Gastrocnemius medialis (tissue), 4 donors: ENCODE measurements at regions of chr16 and their contacts with region 1.

Region 1: GRCh38 chr16:81035398-81035974 is at the start of gene ATMIN:
- DNase-seq: peak; percentile 58 to 75
- ATAC-seq: peak; percentile 92 to 93
- H3K4me3 ChIP-seq: peak within 1 kb of the TSS; percentile 59 to 74 (median 72)
- H3K27ac ChIP-seq: peak within 1 kb of the TSS; percentile 66 to 78 (median 76)
- H3K4me1 ChIP-seq: peaks cover 11 to 21% of the 10 kb centered on the region in 2 donors
- H3K27me3 ChIP-seq: no peaks in the 10 kb centered on the region
- CTCF ChIP-seq: peak; percentile 90 to 99 (median 98)
- POLR2A ChIP-seq: peak; percentile 56 to 70
- total RNA-seq, gene ATMIN: 31.1 to 37.1 (median 35.2) TPM

Region 2: GRCh38 chr16:80778707-80779106 is 256.8 kb before region 1 on chr16:
- in situ Hi-C with region 1: no loop called
- intact Hi-C with region 1: no loop called
- DNase-seq: no peak
- ATAC-seq: no peak
- H3K4me3 ChIP-seq: no peak overlapping the region
- H3K27ac ChIP-seq: no peak overlapping the region
- H3K4me1 ChIP-seq: no peaks in the 10 kb centered on the region
- H3K27me3 ChIP-seq: no peaks in the 10 kb centered on the region
- CTCF ChIP-seq: no peak
- POLR2A ChIP-seq: no peak

Region 3: GRCh38 chr16:81006814-81007696 is 28.4 kb before region 1 on chr16 and contains the starts of genes CENPN and CMC2:
- in situ Hi-C with region 1: no loop called
- intact Hi-C with region 1: loop called (anchors 1 kb)
- DNase-seq: peak; percentile 97 to 99
- ATAC-seq: peak; percentile 91 to 95
- H3K4me3 ChIP-seq: peak within 1 kb of the TSS; percentile 87 to 100 (median 98)
- H3K27ac ChIP-seq: peak within 1 kb of the TSS; percentile 95 to 100 (median 100)
- H3K4me1 ChIP-seq: peaks cover 33 to 35% of the 10 kb centered on the region in 2 donors
- H3K27me3 ChIP-seq: no peaks in the 10 kb centered on the region
- CTCF ChIP-seq: peak in 2 of 5 experiments; percentile 12 to 19
- POLR2A ChIP-seq: peak; percentile 97
- total RNA-seq, gene CENPN: 5.2 to 10.9 (median 7.5) TPM
- total RNA-seq, gene CMC2: 78.8 to 89.1 (median 82.7) TPM

Region 4: GRCh38 chr16:81077076-81077940 is 41.8 kb after region 1 on chr16 and contains the start of gene C16orf46:
- in situ Hi-C with region 1: loop called in 1 of 4 experiments (anchors 5 kb)
- intact Hi-C with region 1: loop called (anchors 1 kb)
- DNase-seq: peak; percentile 94 to 95
- ATAC-seq: peak; percentile 94 to 97
- H3K4me3 ChIP-seq: peak within 1 kb of the TSS; percentile 73 to 90 (median 82)
- H3K27ac ChIP-seq: peak within 1 kb of the TSS; percentile 90 to 99 (median 94)
- H3K4me1 ChIP-seq: peaks cover 4 to 7% of the 10 kb centered on the region in 2 donors
- H3K27me3 ChIP-seq: no peaks in the 10 kb centered on the region
- CTCF ChIP-seq: no peak
- POLR2A ChIP-seq: peak; percentile 77 to 85
- total RNA-seq, gene C16orf46: 0.88 TPM in 1 of 4 donors, not detected in the others

Region 5: DNA sequence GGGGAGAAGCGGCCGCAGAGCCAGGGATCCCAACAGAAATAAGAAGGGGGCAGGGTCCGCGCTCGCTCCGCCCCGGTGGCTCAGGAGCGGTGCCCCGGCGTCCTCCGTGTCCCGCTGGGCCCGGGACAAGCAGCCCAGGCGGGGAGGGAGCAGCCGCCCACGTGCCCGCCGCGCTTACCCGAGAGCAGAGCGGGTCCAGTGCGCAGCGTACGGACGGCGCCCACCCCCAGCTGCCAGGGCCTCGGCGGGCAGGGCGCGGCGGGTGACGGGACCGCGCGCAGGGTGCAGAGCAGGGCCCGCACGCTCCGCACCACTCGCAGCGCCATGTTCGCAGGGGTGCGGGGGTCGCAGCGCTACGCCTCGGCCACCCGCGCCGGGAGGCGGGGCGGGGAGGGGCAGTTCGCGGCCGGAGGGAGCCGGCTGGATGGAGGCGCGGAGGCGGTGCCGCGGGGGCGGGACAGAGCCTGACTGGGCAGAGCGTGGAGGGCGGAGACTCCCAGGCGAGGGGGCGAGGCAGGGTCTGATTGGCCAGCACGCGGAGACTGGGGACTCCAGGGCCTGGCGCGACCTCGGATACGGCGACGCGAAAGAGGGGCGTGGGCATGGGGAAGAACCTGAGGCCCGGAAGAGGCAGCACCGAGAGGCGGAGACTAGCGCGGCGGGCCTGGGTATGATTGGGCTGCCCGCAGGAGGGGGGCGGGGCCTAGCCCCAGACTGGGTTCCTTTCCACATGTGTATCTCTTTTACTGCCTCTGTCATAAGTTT is 60.6 kb after region 1 on chr16 and contains the start of gene GCSH:
- in situ Hi-C with region 1: no loop called
- intact Hi-C with region 1: loop called (anchors 2 kb)
- DNase-seq: peak; percentile 99
- ATAC-seq: peak; percentile 95
- H3K4me3 ChIP-seq: peak within 1 kb of the TSS; percentile 71 to 97 (median 86)
- H3K27ac ChIP-seq: peak within 1 kb of the TSS; percentile 80 to 93 (median 90)
- H3K4me1 ChIP-seq: peaks cover 5 to 7% of the 10 kb centered on the region in 2 donors
- H3K27me3 ChIP-seq: no peaks in the 10 kb centered on the region
- CTCF ChIP-seq: no peak
- POLR2A ChIP-seq: peak; percentile 58 to 67
- total RNA-seq, gene GCSH: 18.5 to 40.4 (median 30.9) TPM

Region 6: DNA sequence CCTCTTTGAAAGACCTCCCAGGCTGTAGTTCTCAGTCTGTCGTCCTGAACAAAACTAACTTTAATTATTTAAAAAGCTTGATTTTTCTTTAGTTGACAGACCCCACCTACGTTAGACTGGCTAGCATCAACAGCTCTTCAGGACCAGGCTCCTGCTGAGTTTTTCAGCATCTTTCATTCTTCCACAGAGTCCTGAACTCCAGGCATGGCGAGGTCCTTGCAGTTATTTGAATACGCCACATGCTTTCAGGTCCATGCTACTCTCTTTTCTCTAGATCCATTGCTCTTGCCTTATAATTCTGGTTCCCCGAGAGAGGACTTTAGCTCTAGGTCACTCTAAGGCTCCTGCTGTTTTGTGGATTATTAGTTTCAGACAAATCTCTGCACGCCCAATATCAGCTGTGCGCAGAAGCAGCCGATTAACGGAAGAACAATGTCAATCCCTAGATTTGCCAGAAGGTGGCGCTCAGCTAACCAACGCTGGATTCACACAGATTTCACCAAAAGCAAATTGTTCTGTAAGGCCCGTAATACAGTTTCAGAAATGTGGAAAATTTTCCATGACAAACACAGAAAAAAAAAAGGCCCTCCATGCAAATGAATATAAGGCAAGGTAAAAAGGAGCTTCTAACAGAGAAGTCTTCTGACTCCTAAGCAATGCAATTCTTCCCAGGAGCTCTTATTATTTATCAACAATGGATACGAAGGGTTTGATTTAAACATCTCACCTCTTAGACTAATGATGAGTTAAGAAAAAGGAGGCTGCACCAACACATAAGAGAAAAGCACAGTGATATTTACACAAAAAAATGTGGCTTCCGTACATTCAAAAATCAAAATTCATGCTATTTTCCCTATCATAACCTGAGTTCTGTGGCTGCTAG is 169.6 kb after region 1 on chr16:
- in situ Hi-C with region 1: no loop called
- intact Hi-C with region 1: loop called (anchors 10 kb)
- DNase-seq: no peak
- ATAC-seq: peak; percentile 54 to 62
- H3K4me3 ChIP-seq: no peak overlapping the region
- H3K27ac ChIP-seq: no peak overlapping the region
- H3K4me1 ChIP-seq: no peaks in the 10 kb centered on the region
- H3K27me3 ChIP-seq: no peaks in the 10 kb centered on the region
- CTCF ChIP-seq: peak in 4 of 5 experiments; percentile 48 to 53 (median 50)
- POLR2A ChIP-seq: no peak

Region 7: GRCh38 chr16:81314603-81315270 is 279.3 kb after region 1 on chr16 and contains the start of gene GAN:
- in situ Hi-C with region 1: loop called in 1 of 4 experiments (anchors 25 kb)
- intact Hi-C with region 1: loop called (anchors 2 kb)
- DNase-seq: peak; percentile 93
- ATAC-seq: peak; percentile 95 to 96
- H3K4me3 ChIP-seq: peak within 1 kb of the TSS; percentile 69 to 83 (median 80)
- H3K27ac ChIP-seq: peak within 1 kb of the TSS; percentile 75 to 93 (median 88)
- H3K4me1 ChIP-seq: peaks cover 20 to 29% of the 10 kb centered on the region in 2 donors
- H3K27me3 ChIP-seq: no peaks in the 10 kb centered on the region
- CTCF ChIP-seq: no peak
- POLR2A ChIP-seq: peak; percentile 92 to 93
- total RNA-seq, gene GAN: 5.0 to 8.0 (median 6.4) TPM

Region 8: GRCh38 chr16:81493755-81494433 is 458.4 kb after region 1 on chr16:
- in situ Hi-C with region 1: no loop called
- intact Hi-C with region 1: no loop called
- DNase-seq: no peak
- ATAC-seq: peak; percentile 14 to 46
- H3K4me3 ChIP-seq: no peak overlapping the region
- H3K27ac ChIP-seq: peak overlapping the region; percentile 33 to 65 (median 48)
- H3K4me1 ChIP-seq: peaks cover 0 to 3% of the 10 kb centered on the region in 2 donors
- H3K27me3 ChIP-seq: no peaks in the 10 kb centered on the region
- CTCF ChIP-seq: no peak
- POLR2A ChIP-seq: no peak

Region 9: GRCh38 chr16:81737885-81738786 is 702.6 kb after region 1 on chr16:
- in situ Hi-C with region 1: loop called in 1 of 4 experiments (anchors 25 kb)
- intact Hi-C with region 1: no loop called
- DNase-seq: peak; percentile 38 to 47
- ATAC-seq: peak; percentile 85 to 87
- H3K4me3 ChIP-seq: peak overlapping the region in 2 of 4 donors; percentile 7 to 37
- H3K27ac ChIP-seq: no peak overlapping the region
- H3K4me1 ChIP-seq: peaks cover 3 to 6% of the 10 kb centered on the region in 2 donors
- H3K27me3 ChIP-seq: no peaks in the 10 kb centered on the region
- CTCF ChIP-seq: peak; percentile 59 to 72 (median 65)
- POLR2A ChIP-seq: no peak